ENCODE measurements at regions of chr2 and their contacts with region 1.

Region 1: DNA sequence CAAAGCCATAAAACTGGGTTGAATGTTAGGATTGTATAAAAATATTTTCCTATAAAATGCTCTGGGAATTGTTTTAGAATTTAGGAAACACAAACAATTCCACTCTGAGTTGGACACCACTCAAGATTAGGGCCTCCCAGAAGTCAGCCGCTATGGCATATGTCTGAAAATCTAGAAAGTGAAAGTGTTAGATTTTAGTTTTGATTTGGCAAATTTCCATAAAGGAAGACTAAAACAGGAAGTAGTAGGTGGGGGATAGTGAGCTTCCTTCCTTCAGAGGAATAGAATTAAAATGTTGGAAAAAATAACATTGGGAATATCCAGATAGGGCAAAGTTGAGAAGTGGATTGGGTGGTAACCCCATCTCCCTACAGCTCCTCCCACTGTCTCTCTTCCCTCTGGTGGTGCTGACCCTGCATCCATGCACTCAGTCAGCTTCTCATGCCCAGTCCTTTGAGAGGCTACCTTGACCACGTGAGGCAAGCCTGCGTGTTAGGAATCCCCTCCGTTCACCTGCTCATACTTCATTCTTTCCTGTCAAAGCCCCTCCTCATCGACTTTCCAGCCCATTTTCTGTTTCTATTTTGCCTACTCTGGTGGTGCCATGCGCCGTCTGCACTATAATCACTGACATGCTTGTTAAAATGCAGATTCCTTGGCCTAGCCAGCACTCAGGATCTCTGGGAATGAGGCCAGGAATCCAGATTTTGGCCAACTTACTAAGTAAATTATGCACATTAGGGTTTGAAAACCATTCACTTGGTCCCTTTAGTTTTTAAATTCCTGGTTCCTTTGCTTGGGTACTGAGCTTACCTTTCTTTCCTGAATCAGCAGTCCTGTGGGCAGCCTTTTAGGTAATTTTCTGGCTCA is 83.5 kb downstream of the POLE4 start:
- DNase-seq: no peak
- ATAC-seq: peak in 3 of 4 donors; percentile 12 to 69 (median 37)
- H3K4me3 ChIP-seq: peak overlapping the region in 2 of 12 donors; percentile 5 to 13
- H3K27ac ChIP-seq: peak overlapping the region in 11 of 12 donors; percentile 12 to 78 (median 35)
- H3K4me1 ChIP-seq: peaks cover 0 to 28% (median 12%) of the 10 kb centered on the region in 12 donors
- H3K27me3 ChIP-seq: no peaks in the 10 kb centered on the region
- CTCF ChIP-seq: no peak
- POLR2A ChIP-seq: no peak

Region 2: GRCh38 chr2:74958274-74959105 is 83.5 kb before region 1 on chr2 and contains the start of gene POLE4:
- intact Hi-C with region 1: loop called in 1 of 10 experiments (anchors 5 kb)
- DNase-seq: peak; percentile 92 to 97 (median 95)
- ATAC-seq: peak; percentile 92 to 100 (median 98)
- H3K4me3 ChIP-seq: peak within 1 kb of the TSS; percentile 51 to 81 (median 67)
- H3K27ac ChIP-seq: peak within 1 kb of the TSS; percentile 34 to 97 (median 92)
- H3K4me1 ChIP-seq: peaks cover 0 to 22% (median 9%) of the 10 kb centered on the region in 12 donors
- H3K27me3 ChIP-seq: no peaks in the 10 kb centered on the region
- CTCF ChIP-seq: peak in 4 of 12 donors; percentile 1 to 20 (median 12)
- POLR2A ChIP-seq: peak in 1 of 2 donors; percentile 77
- total RNA-seq, gene POLE4: 12.9 to 73.3 (median 34.9) TPM

Measured in heart left ventricle (tissue), 16 donors.